Sciatic nerve (tissue), 2 donors: ENCODE measurements at regions of chr1 and their contacts with region 1.

Region 1: GRCh38 chr1:180482425-180483275 is 19.7 kb downstream of the ACBD6 start:
- DNase-seq: no peak
- ATAC-seq: peak; percentile 36

Region 2: DNA sequence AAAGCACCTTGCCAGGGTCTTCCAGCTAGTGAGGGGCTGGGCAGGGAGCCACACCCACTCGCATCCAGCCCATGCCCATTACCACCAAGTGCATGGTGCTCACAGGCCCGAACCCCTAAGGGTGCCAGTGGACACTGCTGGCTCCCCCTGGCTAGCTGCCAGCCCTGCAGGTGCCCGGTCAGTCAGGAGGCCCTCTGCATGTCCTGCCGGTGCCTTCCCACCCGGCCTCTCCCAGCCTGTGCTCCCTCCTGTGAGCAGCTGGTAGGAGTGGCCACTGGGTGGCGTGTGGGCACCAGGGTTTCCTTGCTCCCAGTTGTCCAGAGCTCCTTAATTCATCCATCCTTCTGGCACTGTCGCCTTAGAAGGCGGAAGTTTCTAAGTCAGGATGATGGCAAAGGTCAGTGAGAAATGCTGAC is 294.6 kb before region 1 on chr1:
- intact Hi-C with region 1: loop called (anchors 10 kb)
- DNase-seq: peak; percentile 76
- ATAC-seq: peak; percentile 78